A549 (cell line): ENCODE measurements at regions of chr4 and their contacts with region 1.

Region 1: DNA sequence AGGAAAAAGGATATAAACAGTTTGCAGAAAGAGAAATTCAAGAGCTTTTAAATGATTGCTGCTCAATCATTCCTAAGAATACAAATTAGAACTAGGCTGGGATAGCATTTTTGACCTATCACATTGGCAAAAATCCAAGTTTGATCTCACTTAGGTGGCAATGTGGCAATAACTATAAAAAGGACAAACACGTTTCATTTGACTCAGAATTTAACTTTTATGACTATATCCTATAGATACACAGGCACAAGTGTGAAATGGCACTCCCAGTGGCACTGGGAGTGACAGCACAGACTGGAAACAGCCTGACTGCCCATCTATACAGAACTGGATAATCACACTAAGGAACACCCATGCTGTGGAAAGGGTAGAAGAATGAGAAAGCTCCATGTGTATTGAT is 11.1 kb downstream of the CENPU start:
- DNase-seq: no peak
- ATAC-seq: 0 out of 6 replicates have a peak, but pooled peaks of 1 of the 2 experiments have one; percentile 70
- H3K4me3 ChIP-seq: no peak overlapping the region
- H3K27ac ChIP-seq: no peak overlapping the region
- H3K4me1 ChIP-seq: no peaks in the 10 kb centered on the region
- CTCF ChIP-seq: no peak
- EP300 ChIP-seq: no peak
- POLR2A ChIP-seq: no peak
- RAD21 ChIP-seq: no peak

Region 2: DNA sequence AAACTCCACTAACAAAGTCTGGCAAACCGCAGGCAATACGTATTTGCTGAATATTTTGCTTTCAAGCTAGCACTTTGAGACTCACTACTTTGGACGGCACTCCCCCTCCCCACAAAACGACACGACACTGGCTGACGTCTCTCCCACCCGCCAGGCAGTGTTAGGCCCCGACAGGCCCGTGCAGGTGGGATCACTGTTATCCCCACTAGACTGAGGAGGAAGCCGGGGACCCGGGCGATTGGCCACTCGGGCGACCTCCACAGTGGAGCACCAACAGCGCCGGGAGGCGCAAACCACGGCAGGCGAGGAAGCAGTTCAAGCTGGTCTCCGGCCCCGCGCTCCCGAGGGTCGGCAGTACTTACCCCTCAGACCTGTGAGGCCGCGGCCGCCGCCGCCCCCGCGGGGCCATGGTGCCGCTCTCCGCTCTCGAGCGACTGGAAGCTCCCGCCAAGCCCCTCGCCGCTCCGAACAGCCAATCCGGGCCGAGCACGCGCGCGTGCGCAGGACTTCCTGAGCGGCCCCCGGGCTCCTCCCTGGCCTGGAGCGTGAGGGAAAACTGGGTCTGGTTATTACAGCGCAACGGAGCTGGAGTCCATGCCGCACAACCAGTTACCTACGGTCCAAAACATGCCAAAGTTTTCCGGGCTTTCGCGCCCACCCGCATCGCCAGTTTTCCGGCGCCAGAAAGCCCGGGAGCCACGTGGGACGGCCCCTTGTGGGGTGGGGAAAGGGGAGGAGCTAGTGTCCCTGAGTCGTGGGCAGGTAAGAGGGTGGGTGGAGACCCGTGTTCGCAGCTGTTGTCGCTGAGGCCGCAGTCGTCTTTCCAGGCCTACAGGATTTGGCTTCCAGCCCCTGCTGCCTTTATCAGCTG is 11.1 kb after region 1 on chr4 and contains the start of gene CENPU:
- CTCF ChIA-PET with region 1: interaction called, 13 read pairs
- POLR2A ChIA-PET with region 1: interaction called, 3 read pairs
- DNase-seq: peak; percentile 91 to 96
- ATAC-seq: peak; percentile 95 to 98
- H3K4me3 ChIP-seq: peak within 1 kb of the TSS; percentile 86
- H3K27ac ChIP-seq: peak within 1 kb of the TSS; percentile 73 to 85
- H3K4me1 ChIP-seq: peaks cover 3% of the 10 kb centered on the region; the same call in 1 of the 3 replicates
- CTCF ChIP-seq: no peak
- EP300 ChIP-seq: no peak
- POLR2A ChIP-seq: peak; percentile 54
- RAD21 ChIP-seq: no peak
- polyA plus RNA-seq, gene CENPU: 19.1 and 28.4 TPM in 2 replicates